ENCODE measurements at regions of chr22 and their contacts with region 1.

Region 1: GRCh38 chr22:23137905-23138561 is 3.8 kb downstream of the RSPH14 start:
- DNase-seq: peak in 1 of 2 donors; percentile 61
- H3K4me3 ChIP-seq: no peak overlapping the region
- H3K27ac ChIP-seq: peak overlapping the region in 4 of 5 donors; percentile 17 to 68 (median 34)
- H3K4me1 ChIP-seq: peaks cover 15 to 32% (median 20%) of the 10 kb centered on the region in 4 donors
- H3K27me3 ChIP-seq: no peaks in the 10 kb centered on the region
- CTCF ChIP-seq: no peak
- EP300 ChIP-seq: no peak
- POLR2A ChIP-seq: no peak

Region 2: GRCh38 chr22:22855617-22856308 is 282.3 kb before region 1 on chr22:
- intact Hi-C with region 1: loop called (anchors 10 kb)
- DNase-seq: peak in 1 of 2 donors; percentile 30
- H3K4me3 ChIP-seq: no peak overlapping the region
- H3K27ac ChIP-seq: no peak overlapping the region
- H3K4me1 ChIP-seq: no peaks in the 10 kb centered on the region
- H3K27me3 ChIP-seq: peaks cover 0 to 68% (median 6%) of the 10 kb centered on the region in 3 donors
- CTCF ChIP-seq: peak in 1 of 7 experiments; percentile 28
- EP300 ChIP-seq: no peak
- POLR2A ChIP-seq: no peak